ENCODE measurements at regions of chr19 and their contacts with region 1.

Region 1: DNA sequence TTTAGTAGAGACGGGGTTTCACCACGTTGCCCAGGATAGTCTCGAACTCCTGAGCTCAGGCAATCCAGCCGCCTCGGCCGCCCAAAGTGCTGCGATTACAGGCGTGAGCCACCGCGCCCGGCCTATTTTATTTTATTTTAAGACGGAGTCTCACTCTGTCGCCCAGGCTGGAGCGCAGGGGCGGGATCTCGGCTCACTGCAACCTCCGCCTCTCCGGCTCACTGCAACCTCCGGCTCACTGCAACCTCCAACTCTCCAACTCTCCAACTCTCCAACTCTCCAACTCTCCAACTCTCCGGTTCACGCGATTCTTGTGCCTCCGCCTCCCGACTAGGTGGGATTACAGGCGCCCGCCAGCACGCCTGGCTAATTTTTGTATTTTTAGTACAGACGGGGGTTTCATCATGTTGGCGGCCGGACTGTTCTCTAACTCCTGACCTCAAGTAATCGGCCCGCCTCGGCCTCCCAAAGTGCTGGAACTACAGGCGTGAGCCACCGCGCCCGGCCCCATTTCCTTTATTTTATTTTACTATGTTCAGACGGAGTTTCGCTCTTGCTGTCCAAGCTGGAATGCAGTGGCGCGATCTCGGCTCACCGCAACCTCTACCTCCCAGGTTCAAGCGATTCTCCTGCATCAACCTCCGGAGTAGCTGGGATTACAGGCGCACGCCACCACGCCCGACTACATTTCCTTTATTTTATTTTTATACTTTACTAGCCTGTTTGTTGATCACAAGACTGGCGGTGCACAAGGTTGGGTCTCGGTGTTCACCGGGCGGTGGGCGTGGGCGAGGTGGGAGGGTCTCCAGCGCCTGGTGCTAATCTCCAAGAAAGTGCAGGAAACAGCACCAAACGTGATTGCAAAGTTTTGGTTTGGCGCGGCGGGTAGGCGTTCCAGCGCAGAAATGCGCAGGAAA is 23.7 kb upstream of the ZNF850 start:
- DNase-seq: no peak
- ATAC-seq: no peak
- H3K4me3 ChIP-seq: peak overlapping the region; percentile 92 to 97
- H3K4me3 Mint-ChIP-seq: peak overlapping the region; percentile 97
- H3K27ac ChIP-seq: peak overlapping the region; percentile 76 to 90
- H3K27ac Mint-ChIP-seq: peak overlapping the region; percentile 98
- H3K4me1 ChIP-seq: peaks cover 3% of the 10 kb centered on the region
- H3K4me1 Mint-ChIP-seq: peaks cover 21% of the 10 kb centered on the region
- H3K27me3 ChIP-seq: no peaks in the 10 kb centered on the region
- H3K27me3 Mint-ChIP-seq: peaks cover 6% of the 10 kb centered on the region
- CTCF ChIP-seq: no peak

Region 2: GRCh38 chr19:36160821-36161596 is 635.3 kb before region 1 on chr19:
- CTCF ChIA-PET with region 1: no interaction called
- POLR2A ChIA-PET with region 1: no interaction called
- intact Hi-C with region 1: no loop called
- DNase-seq: no peak
- ATAC-seq: no peak
- H3K4me3 ChIP-seq: no peak overlapping the region
- H3K4me3 Mint-ChIP-seq: no peak overlapping the region
- H3K27ac ChIP-seq: no peak overlapping the region
- H3K27ac Mint-ChIP-seq: no peak overlapping the region
- H3K4me1 ChIP-seq: no peaks in the 10 kb centered on the region
- H3K4me1 Mint-ChIP-seq: no peaks in the 10 kb centered on the region
- H3K27me3 ChIP-seq: no peaks in the 10 kb centered on the region
- H3K27me3 Mint-ChIP-seq: no peaks in the 10 kb centered on the region
- CTCF ChIP-seq: no peak

Region 3: GRCh38 chr19:36837906-36838783 is 41.8 kb after region 1 on chr19 and contains the start of gene ZNF790:
- CTCF ChIA-PET with region 1: no interaction called
- POLR2A ChIA-PET with region 1: interaction called, 3 read pairs
- intact Hi-C with region 1: loop called (anchors 1 kb)
- DNase-seq: peak; percentile 62 to 92 (median 81)
- ATAC-seq: peak; percentile 87
- H3K4me3 ChIP-seq: peak within 1 kb of the TSS; percentile 86 to 91
- H3K4me3 Mint-ChIP-seq: no peak within 1 kb of the TSS
- H3K27ac ChIP-seq: peak within 1 kb of the TSS; percentile 88 to 97
- H3K27ac Mint-ChIP-seq: no peak within 1 kb of the TSS
- H3K4me1 ChIP-seq: peaks cover 17% of the 10 kb centered on the region
- H3K4me1 Mint-ChIP-seq: peaks cover 21% of the 10 kb centered on the region
- H3K27me3 ChIP-seq: no peaks in the 10 kb centered on the region
- H3K27me3 Mint-ChIP-seq: no peaks in the 10 kb centered on the region
- CTCF ChIP-seq: no peak
- total RNA-seq, gene ZNF790: 2.1 to 3.6 TPM

Region 4: DNA sequence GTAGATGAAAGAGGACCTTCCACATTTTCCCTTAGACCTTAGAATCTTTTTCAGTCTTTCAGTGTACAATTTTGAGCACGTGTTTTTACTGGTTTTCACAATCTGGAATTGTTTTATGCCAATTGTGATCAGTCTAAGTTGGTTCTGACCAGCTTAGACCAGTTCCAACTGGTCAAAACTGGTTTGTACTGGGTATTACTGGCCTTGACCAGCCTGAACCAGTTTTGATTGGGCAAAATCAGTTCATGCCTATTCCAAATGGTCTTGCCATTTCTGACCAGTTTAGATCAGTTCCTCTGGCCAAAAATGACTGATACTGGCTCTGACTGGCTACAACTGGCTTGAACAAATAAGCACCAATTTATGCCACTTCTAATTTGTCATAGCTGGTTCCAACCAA is 339.8 kb after region 1 on chr19:
- CTCF ChIA-PET with region 1: no interaction called
- POLR2A ChIA-PET with region 1: no interaction called
- intact Hi-C with region 1: no loop called
- DNase-seq: no peak
- ATAC-seq: no peak
- H3K4me3 ChIP-seq: no peak overlapping the region
- H3K4me3 Mint-ChIP-seq: no peak overlapping the region
- H3K27ac ChIP-seq: no peak overlapping the region
- H3K27ac Mint-ChIP-seq: no peak overlapping the region
- H3K4me1 ChIP-seq: no peaks in the 10 kb centered on the region
- H3K4me1 Mint-ChIP-seq: no peaks in the 10 kb centered on the region
- H3K27me3 ChIP-seq: no peaks in the 10 kb centered on the region
- H3K27me3 Mint-ChIP-seq: no peaks in the 10 kb centered on the region
- CTCF ChIP-seq: no peak